ENCODE measurements at regions of chr19 and their contacts with region 1.

Region 1: DNA sequence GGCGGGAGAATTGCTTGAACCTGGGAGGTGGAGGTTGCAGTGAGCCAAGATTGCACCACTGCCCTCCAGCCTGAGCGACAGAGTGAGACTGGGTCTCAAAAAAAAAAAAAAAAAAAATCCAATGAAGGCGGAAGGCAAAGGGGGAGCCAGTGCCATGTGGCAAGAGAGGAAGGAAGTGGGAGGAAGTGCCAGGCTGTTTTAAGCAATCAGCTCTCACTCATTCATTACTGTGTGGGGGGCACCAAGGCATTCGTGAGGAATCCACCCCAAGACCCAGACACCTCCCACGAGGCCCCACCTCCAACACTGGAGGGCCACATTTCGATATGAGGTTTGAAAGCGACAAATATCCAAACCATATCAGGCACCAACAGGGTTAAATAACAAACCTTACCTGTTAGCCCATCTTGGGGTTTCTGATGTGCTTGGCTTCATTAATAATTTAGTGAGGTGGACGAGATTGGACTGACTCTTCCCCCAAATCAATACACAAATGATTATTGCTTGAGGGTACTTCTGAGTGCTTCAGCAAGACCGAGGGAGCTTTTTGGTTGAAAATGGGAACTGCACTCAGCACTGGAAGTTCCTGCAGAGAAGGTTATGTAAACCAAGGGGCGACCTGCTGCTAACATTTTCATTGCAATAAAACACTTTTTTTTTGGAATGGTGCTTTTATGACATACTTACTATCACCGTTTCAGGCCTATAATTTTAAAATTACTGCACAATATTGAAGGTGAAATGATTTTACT is 7.5 kb upstream of the LRP3 start:
- DNase-seq: no peak
- ATAC-seq: no peak
- H3K4me3 ChIP-seq: no peak overlapping the region
- H3K27ac ChIP-seq: no peak overlapping the region
- H3K4me1 ChIP-seq: no peaks in the 10 kb centered on the region
- H3K27me3 ChIP-seq: no peaks in the 10 kb centered on the region
- CTCF ChIP-seq: no peak

Region 2: GRCh38 chr19:33125929-33126388 is 60.6 kb before region 1 on chr19:
- CTCF ChIA-PET with region 1: interaction called, 3 read pairs
- POLR2A ChIA-PET with region 1: no interaction called
- intact Hi-C with region 1: loop called (anchors 10 kb)
- DNase-seq: peak; percentile 58
- ATAC-seq: peak; percentile 77
- H3K4me3 ChIP-seq: no peak overlapping the region
- H3K27ac ChIP-seq: no peak overlapping the region
- H3K4me1 ChIP-seq: no peaks in the 10 kb centered on the region
- H3K27me3 ChIP-seq: no peaks in the 10 kb centered on the region
- CTCF ChIP-seq: peak; percentile 76

Region 3: GRCh38 chr19:33143897-33144405 is 42.7 kb before region 1 on chr19:
- CTCF ChIA-PET with region 1: interaction called, 8 read pairs
- POLR2A ChIA-PET with region 1: no interaction called
- intact Hi-C with region 1: loop called (anchors 1 kb)
- DNase-seq: peak; percentile 62
- ATAC-seq: peak; percentile 98
- H3K4me3 ChIP-seq: peak overlapping the region; percentile 17; the same call in 1 of the 2 replicates
- H3K27ac ChIP-seq: no peak overlapping the region
- H3K4me1 ChIP-seq: no peaks in the 10 kb centered on the region
- H3K27me3 ChIP-seq: no peaks in the 10 kb centered on the region
- CTCF ChIP-seq: peak; percentile 79

Measured in PC-3 (cell line).